OCI-LY7 (cell line): ENCODE measurements at regions of chr9 and their contacts with region 1.

Region 1: DNA sequence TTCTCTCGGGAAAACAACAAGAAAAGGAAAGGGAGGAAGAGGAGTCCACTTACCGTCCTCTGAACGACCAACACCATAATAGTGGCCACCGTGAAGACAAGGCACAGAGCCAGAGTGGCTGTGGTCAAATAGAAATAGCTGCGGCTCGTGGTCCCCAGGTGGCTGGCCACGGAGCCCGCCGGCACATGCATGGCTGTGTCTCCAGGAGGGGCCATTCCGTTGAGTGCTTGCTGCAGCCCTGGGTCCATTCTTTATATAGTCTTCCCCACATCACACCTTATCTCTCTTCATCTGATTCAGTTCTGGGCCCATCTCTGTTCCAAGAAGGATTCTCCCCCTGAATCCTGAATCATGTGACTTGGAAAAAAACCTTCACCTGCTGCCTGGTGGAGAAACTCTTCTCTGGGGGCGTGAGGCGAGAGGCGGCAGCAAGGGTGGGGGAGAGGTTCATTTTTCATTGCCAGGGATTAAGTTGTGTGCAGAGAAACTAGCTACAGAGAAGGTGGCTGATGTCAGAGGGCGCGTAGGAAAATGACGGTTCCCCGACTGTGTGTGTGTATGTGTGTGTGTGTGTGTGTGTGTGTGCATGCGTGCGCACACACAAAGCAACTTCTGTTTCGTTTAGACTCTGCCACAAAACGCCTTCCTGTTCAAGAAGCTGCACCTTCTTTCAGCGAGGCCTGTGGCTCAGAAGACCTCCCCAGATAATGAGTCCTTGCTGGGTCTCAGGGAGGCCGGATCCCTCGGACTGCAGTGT is at the start of gene TNFSF8:
- DNase-seq: peak; percentile 90
- H3K4me3 ChIP-seq: peak within 1 kb of the TSS; percentile 76
- H3K27ac ChIP-seq: peak within 1 kb of the TSS; percentile 90
- H3K4me1 ChIP-seq: peaks cover 42% of the 10 kb centered on the region
- CTCF ChIP-seq: 0 out of 2 replicates have a peak, but pooled peaks have one; percentile 18
- total RNA-seq, gene TNFSF8: 27.7 and 28.4 TPM in 2 replicates

Region 2: DNA sequence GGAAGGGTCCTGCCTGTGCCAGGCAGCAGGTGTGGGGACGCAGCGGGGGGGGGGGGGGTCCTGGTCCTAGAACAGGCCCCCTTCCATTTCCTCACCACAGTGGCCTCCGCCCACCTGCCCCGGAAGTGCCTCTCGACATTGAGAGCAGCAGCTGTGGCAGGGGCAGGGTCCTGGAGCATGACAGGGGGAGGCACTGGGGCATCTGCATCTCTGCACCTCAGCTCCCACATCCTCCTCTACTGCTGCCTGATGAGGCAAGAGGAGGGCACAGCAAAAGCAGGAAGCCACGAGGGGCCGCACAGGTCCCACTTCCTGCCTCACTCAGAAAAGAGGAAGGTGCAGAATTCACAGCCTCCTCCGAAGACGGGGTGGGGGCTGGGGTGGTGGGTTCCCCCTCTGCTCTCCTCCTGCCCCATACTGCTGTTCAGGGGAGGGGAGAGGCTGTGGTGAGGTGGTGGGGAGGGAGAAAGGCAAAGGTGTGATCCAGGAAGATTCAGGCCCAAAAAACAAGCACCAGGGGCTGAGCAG is 557.2 kb before region 1 on chr9:
- CTCF ChIA-PET with region 1: no interaction called
- POLR2A ChIA-PET with region 1: no interaction called
- intact Hi-C with region 1: loop called (anchors 5 kb)
- DNase-seq: peak; percentile 99
- H3K4me3 ChIP-seq: peak overlapping the region; percentile 56
- H3K27ac ChIP-seq: peak overlapping the region; percentile 99
- H3K4me1 ChIP-seq: peaks cover 94% of the 10 kb centered on the region
- CTCF ChIP-seq: no peak

Region 3: DNA sequence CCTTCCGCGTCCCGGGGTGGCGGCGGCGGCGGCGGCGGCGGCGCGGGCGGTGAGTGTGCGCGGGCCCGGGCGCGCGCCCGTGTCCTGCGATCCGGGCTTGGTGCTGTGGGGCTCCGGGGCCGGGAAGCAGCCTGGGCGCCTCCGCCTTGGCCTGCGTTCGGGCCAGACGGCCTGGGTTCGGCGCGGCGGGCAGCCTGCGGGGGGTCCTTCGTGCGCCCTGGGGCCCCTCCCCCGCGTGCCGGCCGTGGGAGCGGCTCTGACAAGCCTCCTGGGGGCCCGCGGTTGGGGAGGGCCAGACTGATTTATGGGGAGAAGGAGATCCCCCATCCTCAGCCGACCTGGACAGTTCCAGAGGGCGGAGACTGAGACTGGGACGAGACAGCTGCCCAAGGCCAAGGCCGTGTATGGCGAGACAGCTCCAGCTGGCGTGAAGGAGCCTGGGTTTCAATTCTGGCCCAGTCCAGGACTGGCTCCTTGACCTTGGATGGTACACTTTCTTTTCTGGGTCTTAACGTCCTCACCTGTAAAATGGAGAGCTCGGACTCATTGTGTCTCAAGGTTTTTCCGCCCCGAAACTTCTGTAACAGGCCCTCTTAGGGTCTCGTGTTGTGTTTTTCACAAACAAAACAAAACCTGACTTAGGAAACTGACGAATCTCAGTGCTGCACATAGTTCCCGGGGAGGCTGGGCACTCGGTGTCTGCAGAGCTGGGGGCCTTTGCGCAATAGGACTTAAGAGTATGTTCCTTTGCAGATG is 318.5 kb before region 1 on chr9:
- CTCF ChIA-PET with region 1: no interaction called
- POLR2A ChIA-PET with region 1: no interaction called
- intact Hi-C with region 1: loop called (anchors 5 kb)
- DNase-seq: peak; percentile 62
- H3K4me3 ChIP-seq: peak overlapping the region; percentile 95
- H3K27ac ChIP-seq: peak overlapping the region; percentile 86
- H3K4me1 ChIP-seq: peaks cover 72% of the 10 kb centered on the region
- CTCF ChIP-seq: no peak

Region 4: GRCh38 chr9:114894801-114895433 is 35.3 kb before region 1 on chr9:
- CTCF ChIA-PET with region 1: no interaction called
- POLR2A ChIA-PET with region 1: interaction called, 24 read pairs
- intact Hi-C with region 1: loop called (anchors 2 kb)
- DNase-seq: peak; percentile 56
- H3K4me3 ChIP-seq: peak overlapping the region; percentile 22
- H3K27ac ChIP-seq: peak overlapping the region; percentile 93
- H3K4me1 ChIP-seq: peaks cover 71% of the 10 kb centered on the region
- CTCF ChIP-seq: no peak

Region 5: DNA sequence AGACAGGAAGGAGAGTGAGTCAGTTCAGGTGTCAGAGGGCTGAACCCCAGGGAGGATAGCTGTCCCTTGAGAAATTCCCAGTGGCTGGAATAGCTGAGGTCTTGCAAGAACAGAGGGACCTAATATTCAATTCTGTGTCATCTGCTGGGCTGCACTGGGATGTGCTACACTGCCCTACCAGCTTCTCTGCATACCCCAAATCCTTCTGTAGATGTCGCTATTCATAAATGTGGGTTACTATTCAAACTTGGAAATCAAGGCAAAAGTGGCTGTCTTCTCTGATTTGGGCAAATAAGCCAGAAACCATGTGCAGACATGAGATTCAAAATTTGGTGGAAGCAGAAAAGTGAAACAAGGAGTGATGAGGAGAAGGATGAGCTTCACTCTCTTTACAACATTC is 16.1 kb before region 1 on chr9:
- CTCF ChIA-PET with region 1: interaction called, 9 read pairs
- POLR2A ChIA-PET with region 1: interaction called, 108 read pairs
- intact Hi-C with region 1: loop called (anchors 1 kb)
- DNase-seq: no peak
- H3K4me3 ChIP-seq: no peak overlapping the region
- H3K27ac ChIP-seq: no peak overlapping the region
- H3K4me1 ChIP-seq: peaks cover 64% of the 10 kb centered on the region
- CTCF ChIP-seq: peak; percentile 76

Region 6: DNA sequence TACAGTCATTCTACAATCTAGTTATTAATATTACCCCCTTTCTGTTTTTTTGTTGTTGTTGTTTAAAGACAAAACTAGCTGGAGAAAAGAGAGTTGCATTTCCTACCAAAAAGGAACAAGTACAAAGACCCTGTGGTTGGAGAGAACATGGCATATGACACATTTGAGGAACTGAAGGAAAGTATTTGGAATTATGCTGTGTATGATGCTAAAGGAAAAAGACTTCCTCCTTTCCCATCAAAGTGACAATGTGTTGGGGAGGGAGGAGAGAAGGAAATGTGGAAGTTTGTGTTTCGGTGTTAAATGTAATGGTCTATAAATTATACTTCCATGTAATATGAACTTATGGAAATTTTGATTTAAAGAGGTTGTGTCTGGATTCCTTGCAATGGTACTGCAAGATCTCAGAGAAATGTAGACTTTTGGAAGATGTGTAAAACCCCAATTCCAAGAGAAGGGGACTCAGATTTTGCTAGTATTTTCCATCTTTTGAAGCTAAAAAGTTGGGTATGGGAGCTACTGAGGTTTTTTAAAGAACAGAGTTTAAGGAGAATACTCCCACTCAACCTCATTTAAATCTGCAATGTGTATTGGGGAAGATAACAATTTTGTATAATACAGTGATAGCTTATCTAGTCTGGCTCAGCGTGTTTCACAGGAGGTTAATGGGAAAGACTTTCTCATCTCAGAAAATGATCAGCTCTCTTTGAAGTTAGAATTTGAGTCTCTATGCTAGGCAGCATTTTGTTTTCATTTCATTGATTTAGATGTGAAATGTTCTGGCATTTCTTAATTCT is 15.6 kb after region 1 on chr9:
- CTCF ChIA-PET with region 1: no interaction called
- POLR2A ChIA-PET with region 1: interaction called, 15 read pairs
- intact Hi-C with region 1: no loop called
- DNase-seq: no peak
- H3K4me3 ChIP-seq: no peak overlapping the region
- H3K27ac ChIP-seq: no peak overlapping the region
- H3K4me1 ChIP-seq: peaks cover 24% of the 10 kb centered on the region
- CTCF ChIP-seq: no peak